Activated B cell treated with CpG ODN at 0.5 μM for 24 hours (primary cell): ENCODE measurements at regions of chr4 and their contacts with region 1.

Region 1: DNA sequence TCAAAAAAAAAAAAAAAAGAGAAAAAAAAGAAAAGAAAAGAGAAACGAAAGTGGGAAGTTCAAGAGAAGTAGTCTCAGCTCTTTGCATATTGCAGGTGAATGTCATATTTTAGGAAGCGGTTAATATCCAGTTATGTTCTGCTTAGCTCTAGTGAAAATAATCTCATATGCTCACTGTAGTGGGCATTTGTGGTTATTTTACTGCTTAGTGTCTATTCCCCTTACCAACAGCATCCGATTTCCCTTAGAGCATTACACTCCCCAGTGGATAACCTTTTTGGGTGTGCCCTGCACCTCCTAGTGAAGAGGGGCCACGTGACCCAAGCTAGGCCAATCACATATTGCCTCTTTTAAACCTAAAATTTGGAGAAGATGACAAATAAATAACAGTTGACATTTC is 111.2 kb upstream of the ZNF827 start:
- DNase-seq: no peak
- ATAC-seq: peak; percentile 90
- H3K4me3 Mint-ChIP-seq: peak overlapping the region; percentile 50
- H3K27ac Mint-ChIP-seq: peak overlapping the region; percentile 81
- H3K4me1 Mint-ChIP-seq: peaks cover 73% of the 10 kb centered on the region
- H3K27me3 Mint-ChIP-seq: no peaks in the 10 kb centered on the region
- CTCF ChIP-seq: no peak

Region 2: DNA sequence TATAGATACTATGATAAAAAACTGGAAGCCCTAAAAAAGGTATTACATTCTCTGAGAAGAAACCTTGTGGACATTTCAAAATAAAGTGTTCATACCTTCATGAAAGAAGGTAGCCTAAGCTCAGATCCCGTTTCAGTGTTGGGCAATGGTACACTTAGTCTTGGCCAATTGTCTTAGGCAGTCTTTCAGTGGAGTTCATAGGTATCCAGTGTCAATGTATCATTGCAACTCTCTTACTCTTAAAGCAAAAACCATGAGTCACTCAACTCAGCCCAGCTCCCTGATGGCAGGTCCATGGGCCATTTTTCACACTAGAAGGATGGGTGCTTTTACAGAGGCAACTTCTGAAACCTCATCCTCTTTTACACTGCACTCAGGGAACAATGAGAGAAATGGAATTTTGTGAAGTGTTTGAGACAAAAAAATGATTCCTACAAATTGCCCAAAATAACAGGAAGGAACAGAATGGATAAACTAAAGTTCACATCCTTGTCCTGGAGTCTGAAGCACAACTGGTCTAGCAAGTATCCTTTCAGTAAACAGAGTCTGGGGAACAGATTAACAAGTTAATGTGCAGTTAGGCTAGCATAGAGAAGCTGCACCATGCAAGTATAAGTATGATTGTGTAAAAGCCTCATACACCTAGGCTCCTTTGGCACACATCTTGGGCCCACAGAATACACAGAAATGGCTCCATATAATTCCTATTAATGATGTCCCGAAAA is 104.2 kb before region 1 on chr4:
- CTCF ChIA-PET with region 1: no interaction called
- POLR2A ChIA-PET with region 1: no interaction called
- intact Hi-C with region 1: no loop called
- DNase-seq: no peak
- ATAC-seq: no peak
- H3K4me3 Mint-ChIP-seq: no peak overlapping the region
- H3K27ac Mint-ChIP-seq: no peak overlapping the region
- H3K4me1 Mint-ChIP-seq: no peaks in the 10 kb centered on the region
- H3K27me3 Mint-ChIP-seq: peaks cover 5% of the 10 kb centered on the region
- CTCF ChIP-seq: no peak

Region 3: GRCh38 chr4:145956288-145956890 is 93.4 kb before region 1 on chr4:
- CTCF ChIA-PET with region 1: interaction called, 3 read pairs
- POLR2A ChIA-PET with region 1: no interaction called
- intact Hi-C with region 1: loop called (anchors 2 kb)
- DNase-seq: no peak
- ATAC-seq: peak; percentile 77
- H3K4me3 Mint-ChIP-seq: no peak overlapping the region
- H3K27ac Mint-ChIP-seq: no peak overlapping the region
- H3K4me1 Mint-ChIP-seq: peaks cover 6% of the 10 kb centered on the region
- H3K27me3 Mint-ChIP-seq: no peaks in the 10 kb centered on the region
- CTCF ChIP-seq: peak; percentile 87

Region 4: GRCh38 chr4:146110871-146111485 is 61.2 kb after region 1 on chr4:
- CTCF ChIA-PET with region 1: no interaction called
- POLR2A ChIA-PET with region 1: interaction called, 8 read pairs
- intact Hi-C with region 1: loop called (anchors 2 kb)
- DNase-seq: no peak
- ATAC-seq: peak; percentile 88
- H3K4me3 Mint-ChIP-seq: peak overlapping the region; percentile 33
- H3K27ac Mint-ChIP-seq: peak overlapping the region; percentile 63
- H3K4me1 Mint-ChIP-seq: peaks cover 34% of the 10 kb centered on the region
- H3K27me3 Mint-ChIP-seq: no peaks in the 10 kb centered on the region
- CTCF ChIP-seq: no peak

Region 5: DNA sequence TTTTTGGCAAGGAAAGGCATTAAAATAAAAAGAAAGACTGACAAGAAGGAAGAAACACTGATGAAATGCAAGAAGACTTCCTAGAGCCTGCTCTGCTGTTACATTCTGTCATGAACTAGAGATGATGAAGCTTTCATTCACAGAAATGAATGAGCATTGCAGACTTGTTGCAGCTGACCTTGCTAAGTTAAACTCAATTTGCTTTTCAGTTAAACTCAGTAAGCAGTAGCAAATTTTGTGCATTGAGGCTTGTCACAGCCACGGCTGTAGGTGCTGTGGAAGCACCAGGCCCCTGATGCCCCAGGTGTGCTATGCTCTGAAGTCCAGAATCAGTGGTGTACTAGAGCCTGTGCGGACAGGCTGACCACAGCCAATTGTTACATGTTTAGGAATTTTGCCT is 86.1 kb after region 1 on chr4:
- CTCF ChIA-PET with region 1: no interaction called
- POLR2A ChIA-PET with region 1: interaction called, 12 read pairs
- intact Hi-C with region 1: no loop called
- DNase-seq: no peak
- ATAC-seq: no peak
- H3K4me3 Mint-ChIP-seq: no peak overlapping the region
- H3K27ac Mint-ChIP-seq: no peak overlapping the region
- H3K4me1 Mint-ChIP-seq: peaks cover 6% of the 10 kb centered on the region
- H3K27me3 Mint-ChIP-seq: no peaks in the 10 kb centered on the region
- CTCF ChIP-seq: no peak

Region 6: DNA sequence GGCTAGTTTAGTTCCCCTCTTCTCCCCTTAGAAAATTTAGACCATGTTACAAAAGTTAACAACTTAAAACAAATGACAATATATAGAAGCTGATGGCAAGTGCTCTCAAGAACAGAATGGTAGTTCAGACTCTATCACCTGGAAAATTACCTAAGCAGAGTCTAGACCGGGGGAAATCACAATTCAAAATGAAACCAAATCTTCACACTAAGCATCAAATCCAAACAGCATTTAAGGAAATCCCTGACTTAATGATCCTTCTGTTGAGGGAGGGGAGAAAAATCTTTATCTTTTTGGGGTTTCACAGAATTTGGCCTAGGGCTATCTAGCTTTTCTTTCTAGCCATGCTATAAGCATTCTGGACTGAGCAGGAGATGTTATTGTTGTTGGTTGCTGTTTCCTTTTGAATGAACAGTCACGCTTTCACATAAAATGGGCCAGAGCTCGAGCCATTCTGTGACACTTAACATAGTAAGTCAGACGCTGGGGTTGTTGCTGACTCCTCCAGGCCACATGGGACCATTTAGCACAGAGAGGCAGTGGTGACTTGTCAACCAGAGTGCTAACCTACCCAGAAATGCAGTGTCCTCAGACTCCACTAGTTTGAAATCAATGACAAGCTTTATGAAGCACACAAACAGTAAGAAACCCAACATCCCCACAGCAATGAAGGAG is 109.7 kb after region 1 on chr4:
- CTCF ChIA-PET with region 1: no interaction called
- POLR2A ChIA-PET with region 1: no interaction called
- intact Hi-C with region 1: no loop called
- DNase-seq: no peak
- ATAC-seq: no peak
- H3K4me3 Mint-ChIP-seq: no peak overlapping the region
- H3K27ac Mint-ChIP-seq: no peak overlapping the region
- H3K4me1 Mint-ChIP-seq: peaks cover 5% of the 10 kb centered on the region
- H3K27me3 Mint-ChIP-seq: peaks cover 1% of the 10 kb centered on the region
- CTCF ChIP-seq: no peak